MCF 10A (cell line): ENCODE measurements at regions of chr4 and their contacts with region 1.

Region 1: GRCh38 chr4:36722986-36723385 is 441.6 kb downstream of the DTHD1 start:
- DNase-seq: no peak
- H3K4me3 Mint-ChIP-seq: no peak overlapping the region
- H3K27ac Mint-ChIP-seq: no peak overlapping the region
- H3K4me1 Mint-ChIP-seq: no peaks in the 10 kb centered on the region
- H3K27me3 Mint-ChIP-seq: no peaks in the 10 kb centered on the region
- CTCF ChIP-seq: peak; percentile 30

Region 2: DNA sequence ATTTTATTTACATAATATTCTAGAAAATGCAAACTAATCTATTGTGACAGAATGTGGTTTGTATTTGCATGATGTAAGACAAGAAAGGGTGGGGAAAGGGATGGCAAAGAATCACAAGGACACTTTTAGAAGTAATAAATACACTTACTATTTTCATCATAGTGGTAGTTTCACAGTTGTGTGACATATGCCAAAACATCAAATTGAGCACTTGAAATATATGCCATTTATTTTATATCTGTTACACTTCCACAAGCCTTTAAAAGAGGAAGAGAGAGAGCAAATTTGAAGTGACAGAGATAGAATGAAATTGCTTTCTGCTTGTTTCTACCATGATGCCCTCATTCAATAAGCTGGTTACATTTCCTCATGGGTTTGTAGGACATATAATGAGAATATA is 291.6 kb after region 1 on chr4:
- CTCF ChIA-PET with region 1: no interaction called
- POLR2A ChIA-PET with region 1: no interaction called
- intact Hi-C with region 1: no loop called
- DNase-seq: no peak
- H3K4me3 Mint-ChIP-seq: no peak overlapping the region
- H3K27ac Mint-ChIP-seq: no peak overlapping the region
- H3K4me1 Mint-ChIP-seq: no peaks in the 10 kb centered on the region
- H3K27me3 Mint-ChIP-seq: no peaks in the 10 kb centered on the region
- CTCF ChIP-seq: no peak

Region 3: GRCh38 chr4:37383579-37384229 is 660.7 kb after region 1 on chr4:
- CTCF ChIA-PET with region 1: interaction called, 3 read pairs
- POLR2A ChIA-PET with region 1: no interaction called
- intact Hi-C with region 1: loop called (anchors 2 kb)
- DNase-seq: peak; percentile 65
- H3K4me3 Mint-ChIP-seq: no peak overlapping the region
- H3K27ac Mint-ChIP-seq: no peak overlapping the region
- H3K4me1 Mint-ChIP-seq: no peaks in the 10 kb centered on the region
- H3K27me3 Mint-ChIP-seq: no peaks in the 10 kb centered on the region
- CTCF ChIP-seq: peak; percentile 66